ENCODE measurements at regions of chr2 and their contacts with region 1.

Region 1: GRCh38 chr2:216371756-216372702 is at the start of gene MARCHF4:
- DNase-seq: peak; percentile 62
- H3K4me3 ChIP-seq: peak within 1 kb of the TSS; percentile 85
- H3K27me3 ChIP-seq: no peaks in the 10 kb centered on the region
- CTCF ChIP-seq: no peak
- polyA plus RNA-seq, gene MARCHF4: 9.7 and 10.0 TPM in 2 replicates

Region 2: DNA sequence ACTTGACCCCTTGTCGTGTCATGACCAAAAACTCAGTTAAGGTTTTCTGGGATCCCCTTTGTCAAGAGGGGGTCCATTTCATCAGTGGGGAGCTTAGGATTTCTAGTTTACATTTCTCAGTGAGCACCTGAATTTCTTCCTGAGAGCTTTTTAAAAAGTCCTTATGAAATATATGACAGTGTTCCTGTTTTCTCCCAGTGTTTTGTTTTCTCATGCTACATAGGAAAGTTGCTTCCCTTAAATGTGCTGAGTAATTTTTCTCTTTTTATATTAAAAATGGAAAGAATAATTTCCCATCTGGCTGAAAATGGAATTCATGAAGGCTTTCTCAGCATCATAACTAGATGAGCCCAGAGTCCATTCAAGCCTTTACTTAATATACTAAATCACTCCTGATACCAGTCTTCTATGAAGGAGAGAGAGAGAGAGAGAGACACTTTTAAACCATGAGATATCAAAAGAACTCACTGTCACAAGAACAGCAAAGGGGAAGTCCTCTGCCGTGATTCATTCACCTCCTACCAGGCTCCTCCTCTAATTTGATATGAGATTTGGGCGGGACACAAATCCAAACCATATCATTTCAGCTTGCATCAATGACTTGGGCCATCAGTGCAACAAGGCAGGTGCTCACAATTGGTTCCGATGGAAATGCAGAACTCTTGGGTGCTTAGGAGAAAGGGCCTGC is 201.8 kb before region 1 on chr2:
- CTCF ChIA-PET with region 1: no interaction called
- POLR2A ChIA-PET with region 1: interaction called, 13 read pairs
- DNase-seq: no peak
- H3K4me3 ChIP-seq: no peak overlapping the region
- H3K27me3 ChIP-seq: no peaks in the 10 kb centered on the region
- CTCF ChIP-seq: no peak

Region 3: DNA sequence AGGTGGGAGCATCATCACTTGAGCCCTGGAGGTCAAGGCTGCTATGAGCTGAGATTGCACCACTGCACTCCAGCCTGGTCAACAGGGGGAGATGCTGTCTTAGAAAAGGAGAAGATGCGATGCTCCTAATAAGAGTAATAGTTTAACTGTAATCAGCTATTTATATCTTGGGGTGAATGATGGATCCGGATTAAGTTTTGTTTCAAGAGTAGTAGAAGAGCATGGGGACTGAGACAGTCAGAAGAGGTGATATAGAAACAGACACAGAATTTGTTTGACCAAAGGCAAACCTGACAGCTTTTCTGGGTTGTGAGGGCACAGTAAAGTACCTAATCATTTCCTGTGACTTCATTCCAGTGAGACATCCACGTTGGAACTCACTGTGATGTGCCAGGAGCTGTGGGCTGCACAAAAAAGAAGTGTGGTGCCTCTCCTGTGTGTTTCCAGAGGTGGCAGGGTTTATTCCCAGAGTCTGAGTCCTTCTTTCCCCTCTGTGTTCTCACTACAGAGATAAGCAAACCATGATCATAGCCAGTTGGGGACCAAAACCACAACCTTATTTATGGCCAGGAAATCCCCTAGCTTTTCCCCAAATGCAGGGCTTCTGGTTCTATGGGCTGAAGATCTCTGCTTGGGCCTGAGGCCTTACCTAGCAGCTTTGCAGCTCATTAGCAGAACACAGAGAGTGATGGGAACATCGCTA is 149.2 kb before region 1 on chr2:
- CTCF ChIA-PET with region 1: interaction called, 14 read pairs
- POLR2A ChIA-PET with region 1: no interaction called
- DNase-seq: no peak
- H3K4me3 ChIP-seq: no peak overlapping the region
- H3K27me3 ChIP-seq: no peaks in the 10 kb centered on the region
- CTCF ChIP-seq: peak; percentile 51

Region 4: DNA sequence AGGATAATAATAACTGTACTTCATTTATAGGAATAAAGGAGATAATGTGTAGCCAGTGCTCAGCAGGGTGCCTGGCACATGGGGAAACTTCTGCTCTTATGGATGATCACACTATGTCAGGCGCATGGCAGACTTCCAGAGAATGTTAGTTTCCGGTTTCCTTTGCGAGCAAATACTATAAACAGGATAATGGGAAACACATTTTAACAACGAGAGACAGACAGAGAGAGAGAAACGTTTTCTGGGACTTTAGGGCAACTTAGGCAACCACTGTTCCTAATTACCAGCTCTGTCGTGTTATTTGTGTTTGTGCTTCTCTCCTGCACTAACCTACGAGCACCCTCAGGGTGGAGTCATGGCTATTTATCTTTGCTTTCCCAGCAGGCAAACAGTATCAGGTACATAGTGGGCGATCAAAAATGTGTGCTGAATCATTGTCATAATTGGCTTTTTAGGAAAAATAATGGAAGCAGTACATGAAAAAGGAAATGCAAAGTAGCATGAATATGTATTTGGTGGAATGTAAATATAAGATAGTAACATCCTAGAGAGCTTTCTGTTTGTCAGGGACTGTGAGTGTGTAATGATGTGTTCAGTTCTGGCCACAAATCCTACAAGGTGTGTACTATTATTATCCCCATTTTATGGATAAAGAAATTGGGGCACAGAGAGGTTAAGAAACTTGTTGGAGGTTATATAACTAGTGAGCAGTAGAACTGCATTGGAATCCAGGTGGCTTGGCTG is 224.4 kb after region 1 on chr2:
- CTCF ChIA-PET with region 1: no interaction called
- POLR2A ChIA-PET with region 1: no interaction called
- DNase-seq: peak; percentile 90
- H3K4me3 ChIP-seq: no peak overlapping the region
- H3K27me3 ChIP-seq: peaks cover 3% of the 10 kb centered on the region; the same call in 1 of the 2 replicates
- CTCF ChIP-seq: no peak

Measured in BJ (cell line).